GM10248 (cell line): ENCODE measurements at regions of chr2 and their contacts with region 1.

Region 1: GRCh38 chr2:117470311-117471095 is 344.0 kb upstream of the DDX18 start:
- DNase-seq: no peak
- CTCF ChIP-seq: peak; percentile 40

Region 2: DNA sequence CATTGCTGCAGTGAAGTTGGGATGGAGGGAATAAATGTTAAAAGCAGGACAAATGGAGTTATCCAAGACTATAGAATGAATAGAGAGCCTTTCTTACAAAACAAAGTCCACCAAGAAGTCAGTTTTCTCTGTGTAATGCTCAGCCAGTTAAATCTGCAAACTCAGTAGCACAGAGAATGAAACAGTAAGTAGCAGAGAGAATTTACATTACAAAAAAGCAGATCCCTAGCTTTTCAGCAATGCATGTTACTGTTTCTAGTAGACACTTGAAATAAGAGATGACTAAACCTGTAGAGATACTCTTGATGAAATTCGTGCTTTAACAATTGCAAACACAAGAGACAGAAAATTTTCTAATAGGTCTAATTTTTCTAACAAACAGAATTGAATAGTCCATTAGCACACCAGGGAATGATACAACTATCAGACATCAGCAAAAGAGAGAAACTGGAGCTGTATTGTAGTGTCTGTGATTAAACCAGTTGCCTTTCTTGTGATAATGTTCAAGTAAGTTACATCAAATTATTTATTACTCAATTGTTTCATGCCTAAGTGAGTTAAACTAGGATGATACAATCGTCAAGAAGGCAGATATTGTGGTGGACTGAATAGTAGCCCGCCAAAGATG is 21.8 kb after region 1 on chr2:
- CTCF ChIA-PET with region 1: no interaction called
- POLR2A ChIA-PET with region 1: no interaction called
- DNase-seq: no peak
- CTCF ChIP-seq: no peak

Region 3: GRCh38 chr2:117785740-117786139 is 315.2 kb after region 1 on chr2:
- CTCF ChIA-PET with region 1: interaction called, 22 read pairs
- POLR2A ChIA-PET with region 1: no interaction called
- DNase-seq: peak; percentile 32
- CTCF ChIP-seq: peak; percentile 65